ENCODE measurements at regions of chr16 and their contacts with region 1.

Region 1: GRCh38 chr16:24041826-24042631 is 206.2 kb downstream of the PRKCB start:
- DNase-seq: no peak
- H3K4me3 ChIP-seq: no peak overlapping the region
- H3K27ac ChIP-seq: no peak overlapping the region
- H3K4me1 ChIP-seq: no peaks in the 10 kb centered on the region
- H3K27me3 ChIP-seq: peaks cover 0 to 2% (median 0%) of the 10 kb centered on the region in 4 donors
- CTCF ChIP-seq: peak; percentile 52 to 81 (median 70)
- POLR2A ChIP-seq: no peak

Region 2: GRCh38 chr16:24125214-24125613 is 83.2 kb after region 1 on chr16:
- intact Hi-C with region 1: no loop called
- DNase-seq: no peak
- H3K4me3 ChIP-seq: no peak overlapping the region
- H3K27ac ChIP-seq: no peak overlapping the region
- H3K4me1 ChIP-seq: no peaks in the 10 kb centered on the region
- H3K27me3 ChIP-seq: no peaks in the 10 kb centered on the region
- CTCF ChIP-seq: no peak
- POLR2A ChIP-seq: no peak

Region 3: DNA sequence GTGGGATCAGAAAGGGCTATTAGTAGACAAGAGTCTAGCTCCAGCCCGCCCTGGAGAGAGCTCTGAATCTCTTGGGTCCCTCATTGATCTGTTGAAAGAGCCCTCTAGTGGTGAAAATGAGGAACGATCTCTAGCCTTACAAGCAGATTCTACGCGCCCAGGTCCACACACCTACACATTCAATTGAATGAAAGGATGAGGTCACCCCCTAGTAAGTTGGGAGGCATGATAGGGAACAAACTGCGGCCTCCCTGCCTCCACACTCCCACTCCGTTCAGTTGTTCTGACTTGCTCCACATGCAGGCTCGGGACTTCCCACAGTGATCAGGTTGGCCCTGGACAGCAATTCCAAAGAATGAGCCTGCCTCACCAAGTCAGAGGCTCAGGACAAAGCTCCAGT is 211.2 kb after region 1 on chr16:
- intact Hi-C with region 1: loop called (anchors 5 kb)
- DNase-seq: no peak
- H3K4me3 ChIP-seq: no peak overlapping the region
- H3K27ac ChIP-seq: no peak overlapping the region
- H3K4me1 ChIP-seq: no peaks in the 10 kb centered on the region
- H3K27me3 ChIP-seq: peaks cover 0 to 52% (median 1%) of the 10 kb centered on the region in 4 donors
- CTCF ChIP-seq: peak; percentile 39 to 60 (median 51)
- POLR2A ChIP-seq: no peak

Region 4: GRCh38 chr16:24504472-24505345 is 462.7 kb after region 1 on chr16:
- intact Hi-C with region 1: loop called (anchors 5 kb)
- DNase-seq: no peak
- H3K4me3 ChIP-seq: no peak overlapping the region
- H3K27ac ChIP-seq: no peak overlapping the region
- H3K4me1 ChIP-seq: no peaks in the 10 kb centered on the region
- H3K27me3 ChIP-seq: peaks cover 0 to 62% (median 0%) of the 10 kb centered on the region in 4 donors
- CTCF ChIP-seq: peak; percentile 44 to 74 (median 62)
- POLR2A ChIP-seq: no peak

Measured in esophagus squamous epithelium (tissue), 5 donors.